Naive thymus-derived CD8-positive, alpha-beta T cell (primary cell): ENCODE measurements at regions of chr1 and their contacts with region 1.

Region 1: GRCh38 chr1:45303582-45304310 is 22.9 kb upstream of the HPDL start:
- DNase-seq: peak; percentile 86 to 98 (median 96)
- ATAC-seq: peak; percentile 83 to 86
- H3K4me3 Mint-ChIP-seq: peak overlapping the region; percentile 88 to 96 (median 92)
- H3K27ac Mint-ChIP-seq: peak overlapping the region; percentile 91 to 98 (median 96)
- H3K4me1 Mint-ChIP-seq: peaks cover 5 to 37% (median 20%) of the 10 kb centered on the region in 4 donors
- H3K27me3 Mint-ChIP-seq: no peaks in the 10 kb centered on the region

Region 2: DNA sequence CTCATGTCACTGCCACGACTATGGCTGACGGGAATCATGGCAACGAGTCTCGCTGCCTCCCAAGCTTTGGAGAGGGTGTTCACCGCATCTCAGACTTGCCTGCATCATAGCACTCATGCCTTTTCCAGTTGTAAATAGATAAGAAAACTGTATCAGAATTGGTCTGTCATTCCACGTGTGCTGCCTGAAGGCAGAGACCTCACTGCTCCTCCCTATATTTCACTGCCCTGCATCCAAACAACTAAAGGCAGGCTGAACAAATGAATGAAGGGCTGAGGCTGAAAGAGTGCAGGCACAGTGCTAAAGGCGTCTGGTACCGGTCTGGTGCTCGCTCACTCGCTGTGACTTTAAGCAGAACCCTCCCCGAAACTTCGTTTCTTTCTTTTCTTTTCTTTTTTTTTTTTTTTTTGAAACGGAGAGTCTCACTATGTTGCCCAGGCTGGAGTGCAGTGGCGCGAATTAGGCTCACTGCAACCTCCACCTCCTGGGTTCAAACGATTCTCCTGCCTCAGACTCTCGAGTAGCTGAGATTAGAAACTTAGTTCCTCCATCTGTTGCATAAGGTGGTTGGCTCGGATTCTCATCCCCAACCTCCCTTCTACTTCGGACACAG is 317.9 kb before region 1 on chr1:
- POLR2A ChIA-PET with region 1: interaction called, 11 read pairs
- DNase-seq: no peak
- ATAC-seq: no peak
- H3K4me3 Mint-ChIP-seq: peak overlapping the region; percentile 94 to 100 (median 99)
- H3K27ac Mint-ChIP-seq: peak overlapping the region in 9 of 10 donors; percentile 88 to 97 (median 94)
- H3K4me1 Mint-ChIP-seq: peaks cover 9 to 27% (median 23%) of the 10 kb centered on the region in 4 donors
- H3K27me3 Mint-ChIP-seq: no peaks in the 10 kb centered on the region

Region 3: DNA sequence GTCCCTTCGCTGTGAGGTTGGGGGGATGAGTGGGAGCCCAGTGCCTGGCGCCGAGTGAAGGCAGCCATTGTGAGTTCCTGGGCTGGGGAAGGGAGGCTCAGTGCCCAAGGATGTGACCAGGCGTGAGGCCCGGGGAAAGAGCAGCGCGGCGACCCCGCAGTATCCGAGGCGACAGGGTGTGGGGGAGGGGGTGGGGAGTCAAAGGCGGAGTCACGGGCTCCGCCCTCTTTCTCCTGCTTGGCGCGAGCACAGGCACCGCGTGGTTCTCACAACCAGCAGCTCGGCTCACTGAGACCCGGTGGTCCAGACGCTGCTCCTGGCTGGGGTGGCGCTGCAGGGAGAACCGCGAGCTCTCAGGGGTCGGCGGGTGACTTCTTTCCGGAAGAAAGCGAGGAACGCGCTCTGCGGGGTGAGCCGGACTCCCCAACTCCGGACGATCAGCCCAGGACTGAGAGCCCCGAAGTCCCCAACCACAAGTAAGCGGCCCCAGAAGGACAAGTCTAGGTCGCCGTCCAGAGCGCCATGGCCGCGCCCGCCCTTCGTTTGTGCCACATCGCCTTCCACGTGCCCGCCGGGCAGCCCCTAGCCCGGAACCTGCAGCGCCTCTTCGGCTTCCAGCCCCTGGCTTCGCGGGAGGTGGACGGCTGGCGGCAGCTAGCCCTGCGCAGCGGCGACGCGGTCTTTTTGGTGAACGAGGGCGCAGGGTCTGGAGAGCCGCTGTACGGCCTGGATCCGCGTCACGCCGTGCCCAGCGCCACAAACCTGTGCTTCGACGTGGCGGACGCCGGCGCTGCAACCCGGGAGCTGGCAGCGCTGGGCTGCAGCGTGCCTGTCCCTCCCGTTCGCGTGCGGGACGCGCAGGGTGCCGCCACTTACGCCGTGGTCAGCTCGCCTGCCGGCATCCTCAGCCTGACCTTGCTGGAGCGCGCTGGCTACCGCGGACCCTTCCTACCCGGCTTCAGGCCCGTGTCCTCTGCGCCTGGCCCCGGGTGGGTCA is 23.2 kb after region 1 on chr1 and contains the start of gene HPDL:
- POLR2A ChIA-PET with region 1: interaction called, 15 read pairs
- DNase-seq: peak; percentile 27 to 76 (median 51)
- ATAC-seq: peak; percentile 84 to 85
- H3K4me3 Mint-ChIP-seq: peak within 1 kb of the TSS; percentile 81 to 92 (median 84)
- H3K27ac Mint-ChIP-seq: peak within 1 kb of the TSS in 9 of 10 donors; percentile 14 to 86 (median 61)
- H3K4me1 Mint-ChIP-seq: peaks cover 0 to 20% (median 11%) of the 10 kb centered on the region in 4 donors
- H3K27me3 Mint-ChIP-seq: peaks cover 0 to 3% (median 0%) of the 10 kb centered on the region in 5 donors
- polyA plus RNA-seq, gene HPDL: 0.47 to 2.7 (median 1.2) TPM

Region 4: GRCh38 chr1:45385302-45385701 is 81.6 kb after region 1 on chr1:
- POLR2A ChIA-PET with region 1: no interaction called
- DNase-seq: no peak
- ATAC-seq: no peak
- H3K4me3 Mint-ChIP-seq: no peak overlapping the region
- H3K27ac Mint-ChIP-seq: no peak overlapping the region
- H3K4me1 Mint-ChIP-seq: no peaks in the 10 kb centered on the region
- H3K27me3 Mint-ChIP-seq: no peaks in the 10 kb centered on the region

Region 5: DNA sequence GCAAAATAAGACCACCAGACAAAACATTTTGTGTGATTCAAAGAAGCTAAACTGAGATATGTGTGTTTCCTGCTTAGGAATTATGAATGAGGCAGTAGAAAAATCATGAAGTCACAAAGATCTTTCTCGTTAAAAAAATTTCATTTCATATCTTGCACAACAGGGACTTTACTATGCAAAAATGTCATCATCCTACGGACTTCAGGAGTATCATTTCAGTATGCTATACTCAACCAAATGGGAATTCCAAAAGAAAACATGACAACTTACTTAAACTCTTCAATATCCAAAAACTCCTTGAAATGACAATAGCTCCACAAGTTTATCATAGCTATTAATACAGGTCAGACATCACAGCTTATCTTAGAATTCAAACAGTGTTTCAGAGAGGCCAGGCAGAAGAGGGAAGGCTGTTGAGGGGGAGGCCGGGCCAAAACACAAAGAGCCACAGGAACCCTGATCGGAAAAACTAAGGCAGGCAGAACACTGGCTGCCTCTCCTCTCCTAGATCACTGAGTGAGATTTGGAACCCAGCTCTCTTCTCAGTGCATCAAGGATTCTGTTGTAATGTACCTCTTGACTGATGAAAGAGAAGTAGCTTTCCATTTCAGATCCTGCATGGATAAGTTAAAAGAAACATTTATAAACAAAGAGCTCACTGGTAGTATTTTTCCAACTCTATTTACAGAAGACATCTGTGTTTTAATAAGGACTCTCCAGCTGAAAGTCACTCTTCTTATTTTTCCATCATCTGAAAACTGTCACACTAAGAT is 120.3 kb after region 1 on chr1:
- POLR2A ChIA-PET with region 1: no interaction called
- DNase-seq: no peak
- ATAC-seq: no peak
- H3K4me3 Mint-ChIP-seq: no peak overlapping the region
- H3K27ac Mint-ChIP-seq: no peak overlapping the region
- H3K4me1 Mint-ChIP-seq: no peaks in the 10 kb centered on the region
- H3K27me3 Mint-ChIP-seq: peaks cover 0 to 3% (median 2%) of the 10 kb centered on the region in 5 donors

Region 6: GRCh38 chr1:45490626-45491486 is 187.1 kb after region 1 on chr1 and contains the start of gene TESK2:
- POLR2A ChIA-PET with region 1: interaction called, 29 read pairs
- DNase-seq: peak; percentile 94 to 98 (median 97)
- ATAC-seq: peak; percentile 91 to 94
- H3K4me3 Mint-ChIP-seq: no peak within 1 kb of the TSS
- H3K27ac Mint-ChIP-seq: no peak within 1 kb of the TSS
- H3K4me1 Mint-ChIP-seq: peaks cover 6 to 13% (median 12%) of the 10 kb centered on the region in 4 donors
- H3K27me3 Mint-ChIP-seq: no peaks in the 10 kb centered on the region
- polyA plus RNA-seq, gene TESK2: 2.3 to 3.1 (median 2.7) TPM

Region 7: DNA sequence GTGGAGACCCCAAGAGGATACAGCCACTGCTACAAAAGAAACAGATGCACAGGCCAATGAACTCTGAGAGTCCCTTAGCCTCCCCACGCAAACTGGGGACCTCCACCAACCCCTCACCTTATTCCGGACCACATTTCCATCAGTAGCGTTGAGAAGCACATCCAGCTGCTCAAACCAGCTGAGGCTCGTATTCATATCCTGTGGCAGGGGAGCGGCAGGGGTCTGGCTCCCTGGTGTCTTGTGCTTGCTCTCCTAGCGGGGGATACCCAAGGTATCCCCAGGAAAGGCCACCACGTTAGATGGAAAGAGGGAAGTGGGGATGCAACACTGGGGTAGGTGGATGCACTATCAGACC is 195.6 kb after region 1 on chr1:
- POLR2A ChIA-PET with region 1: interaction called, 17 read pairs
- DNase-seq: no peak
- ATAC-seq: no peak
- H3K4me3 Mint-ChIP-seq: peak overlapping the region; percentile 89 to 98 (median 95)
- H3K27ac Mint-ChIP-seq: peak overlapping the region; percentile 72 to 97 (median 95)
- H3K4me1 Mint-ChIP-seq: peaks cover 26 to 40% (median 36%) of the 10 kb centered on the region in 4 donors
- H3K27me3 Mint-ChIP-seq: no peaks in the 10 kb centered on the region